Caco-2 (cell line): ENCODE measurements at regions of chr5 and their contacts with region 1.

Region 1: GRCh38 chr5:171705830-171706468 is 79.7 kb upstream of the SMIM23 start:
- DNase-seq: no peak
- H3K4me3 ChIP-seq: no peak overlapping the region
- H3K4me3 Mint-ChIP-seq: no peak overlapping the region
- H3K27ac Mint-ChIP-seq: no peak overlapping the region
- H3K4me1 ChIP-seq: no peaks in the 10 kb centered on the region
- H3K4me1 Mint-ChIP-seq: no peaks in the 10 kb centered on the region
- H3K27me3 ChIP-seq: no peaks in the 10 kb centered on the region
- H3K27me3 Mint-ChIP-seq: peaks cover 17% of the 10 kb centered on the region
- CTCF ChIP-seq: no peak

Region 2: DNA sequence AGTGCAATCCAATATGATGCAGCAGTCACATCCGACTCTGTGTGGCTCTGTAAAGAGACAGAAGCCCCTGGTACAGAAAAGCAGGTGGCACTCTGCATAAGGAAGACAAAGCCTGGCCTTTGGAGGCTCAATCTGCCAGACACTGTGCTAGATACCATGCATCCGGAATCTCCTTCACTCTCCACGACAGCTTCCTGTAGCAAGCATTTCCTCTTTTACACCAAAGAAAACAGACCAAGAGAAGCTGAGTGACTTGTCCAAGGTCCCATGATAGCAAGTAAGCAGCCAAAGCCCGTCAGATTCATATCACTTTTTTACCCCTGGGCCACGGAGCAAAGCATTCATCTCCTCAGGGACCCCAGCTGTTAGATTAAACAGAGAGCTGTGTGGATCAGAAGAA is 15.5 kb after region 1 on chr5:
- CTCF ChIA-PET with region 1: no interaction called
- POLR2A ChIA-PET with region 1: interaction called, 11 read pairs
- intact Hi-C with region 1: no loop called
- DNase-seq: no peak
- H3K4me3 ChIP-seq: no peak overlapping the region
- H3K4me3 Mint-ChIP-seq: no peak overlapping the region
- H3K27ac Mint-ChIP-seq: no peak overlapping the region
- H3K4me1 ChIP-seq: no peaks in the 10 kb centered on the region
- H3K4me1 Mint-ChIP-seq: no peaks in the 10 kb centered on the region
- H3K27me3 ChIP-seq: peaks cover 5% of the 10 kb centered on the region; the same call in 1 of the 2 replicates
- H3K27me3 Mint-ChIP-seq: peaks cover 24% of the 10 kb centered on the region
- CTCF ChIP-seq: no peak